Activated naive CD4-positive, alpha-beta T cell treated with anti-CD3 and anti-CD28 coated beads for 36 hours (primary cell): ENCODE measurements at regions of chr3 and their contacts with region 1.

Region 1: DNA sequence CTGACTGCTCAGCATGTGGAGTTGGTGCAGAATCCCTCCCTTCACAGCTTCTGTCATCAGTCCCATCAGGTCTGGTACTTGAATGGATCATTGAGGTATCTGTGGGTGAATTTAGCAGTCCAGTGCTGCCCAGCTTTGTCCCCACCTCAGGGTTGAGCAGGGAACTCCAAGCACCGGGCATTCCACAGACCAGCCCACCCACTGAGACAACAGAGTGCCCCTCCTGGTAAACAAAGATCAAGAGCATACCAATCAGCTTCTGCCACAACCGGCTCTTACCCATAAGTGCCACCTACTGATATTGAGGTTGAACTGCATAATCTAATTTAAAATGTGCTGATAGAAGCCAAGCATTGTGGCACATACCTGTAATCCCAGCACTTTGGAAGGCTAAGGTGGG is 57.1 kb upstream of the FXR1 start:
- DNase-seq: no peak
- H3K4me3 Mint-ChIP-seq: no peak overlapping the region
- H3K27ac Mint-ChIP-seq: no peak overlapping the region
- H3K4me1 Mint-ChIP-seq: no peaks in the 10 kb centered on the region
- H3K27me3 Mint-ChIP-seq: peaks cover 12% of the 10 kb centered on the region

Region 2: DNA sequence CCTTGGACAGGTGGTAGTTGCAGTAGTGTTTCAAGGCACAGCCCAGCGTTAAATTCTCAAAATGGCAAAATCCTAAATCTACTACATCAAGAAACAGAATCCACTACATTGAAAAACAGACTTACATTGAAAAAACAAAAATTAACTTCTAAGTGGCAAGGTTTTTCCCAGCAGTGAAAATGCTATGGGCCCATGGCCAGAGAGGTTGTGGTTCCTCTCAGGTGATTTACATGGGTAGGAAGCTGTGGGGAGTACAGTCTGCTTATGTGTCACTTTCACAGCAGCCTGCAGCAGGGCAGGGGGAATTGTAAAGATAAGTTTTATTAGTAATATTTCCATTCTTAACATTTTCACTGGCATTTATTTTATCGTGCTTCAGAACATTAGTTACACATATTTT is 228.5 kb before region 1 on chr3:
- CTCF ChIA-PET with region 1: no interaction called
- intact Hi-C with region 1: loop called (anchors 2 kb)
- DNase-seq: peak; percentile 20
- H3K4me3 Mint-ChIP-seq: no peak overlapping the region
- H3K27ac Mint-ChIP-seq: peak overlapping the region; percentile 18
- H3K4me1 Mint-ChIP-seq: peaks cover 41% of the 10 kb centered on the region
- H3K27me3 Mint-ChIP-seq: no peaks in the 10 kb centered on the region

Region 3: DNA sequence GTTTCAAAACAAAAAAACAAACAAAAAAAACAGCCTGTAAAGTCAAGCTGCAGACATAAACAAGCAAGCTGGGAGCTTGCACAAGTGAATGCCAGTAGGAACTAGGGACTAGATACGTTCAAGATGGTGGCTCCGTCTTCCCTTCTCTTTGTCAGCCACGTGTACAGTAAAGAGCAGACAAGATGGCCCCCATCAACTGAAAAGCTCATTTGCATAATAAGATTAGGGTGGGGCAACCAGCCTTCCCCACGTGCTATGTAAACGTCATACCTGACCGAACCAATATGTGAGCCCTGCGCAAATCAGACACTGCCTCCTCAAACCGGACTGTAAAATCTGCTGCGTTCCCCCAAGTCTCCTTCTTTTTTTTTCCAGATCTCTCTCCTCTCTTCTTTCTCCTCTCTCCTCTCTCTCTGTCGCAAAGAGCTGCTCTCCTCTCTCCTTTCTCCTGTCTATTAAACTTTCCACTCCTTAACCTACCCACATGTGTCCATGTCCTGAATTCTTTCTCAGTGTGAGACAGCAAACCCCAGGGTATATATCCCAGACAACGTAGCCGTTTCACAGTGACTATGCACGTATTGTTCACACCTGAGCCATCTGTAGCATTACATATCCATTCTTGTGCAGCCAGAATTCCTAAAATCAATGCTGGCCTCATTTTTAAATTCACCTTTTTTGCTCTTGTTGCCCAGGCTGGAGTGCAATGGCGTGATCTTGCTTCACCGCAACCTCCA is 25.9 kb after region 1 on chr3:
- CTCF ChIA-PET with region 1: no interaction called
- intact Hi-C with region 1: no loop called
- DNase-seq: no peak
- H3K4me3 Mint-ChIP-seq: no peak overlapping the region
- H3K27ac Mint-ChIP-seq: no peak overlapping the region
- H3K4me1 Mint-ChIP-seq: no peaks in the 10 kb centered on the region
- H3K27me3 Mint-ChIP-seq: peaks cover 17% of the 10 kb centered on the region

Region 4: DNA sequence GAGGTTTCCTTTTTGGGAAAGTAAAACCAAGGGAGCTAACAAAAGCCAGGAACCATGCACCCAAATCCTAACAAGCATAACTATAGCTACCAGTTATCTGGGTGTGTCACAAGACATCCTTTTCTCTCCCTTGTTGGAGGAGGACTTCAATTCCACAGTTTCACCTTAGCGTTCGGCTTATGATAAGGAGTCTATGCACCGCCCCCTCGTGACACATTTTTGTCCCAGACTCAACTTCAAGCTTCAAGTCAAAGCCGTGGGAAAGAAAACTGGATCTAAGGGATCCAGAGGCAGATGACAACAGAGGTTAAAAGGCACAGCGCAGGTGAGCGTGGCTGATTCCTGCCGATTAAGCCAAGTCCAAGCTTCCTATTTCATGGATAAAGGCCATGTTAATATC is 43.2 kb after region 1 on chr3:
- CTCF ChIA-PET with region 1: no interaction called
- intact Hi-C with region 1: no loop called
- DNase-seq: no peak
- H3K4me3 Mint-ChIP-seq: no peak overlapping the region
- H3K27ac Mint-ChIP-seq: no peak overlapping the region
- H3K4me1 Mint-ChIP-seq: no peaks in the 10 kb centered on the region
- H3K27me3 Mint-ChIP-seq: no peaks in the 10 kb centered on the region

Region 5: GRCh38 chr3:181278468-181279238 is 423.3 kb after region 1 on chr3:
- CTCF ChIA-PET with region 1: no interaction called
- intact Hi-C with region 1: no loop called
- DNase-seq: no peak
- H3K4me3 Mint-ChIP-seq: no peak overlapping the region
- H3K27ac Mint-ChIP-seq: no peak overlapping the region
- H3K4me1 Mint-ChIP-seq: no peaks in the 10 kb centered on the region
- H3K27me3 Mint-ChIP-seq: peaks cover 26% of the 10 kb centered on the region